ENCODE measurements at regions of chrX and their contacts with region 1.

Region 1: GRCh38 chrX:50747471-50747900 is 66.5 kb downstream of the SHROOM4 start:
- DNase-seq: no peak
- ATAC-seq: peak; percentile 45; the same call in 1 of the 3 replicates
- H3K4me3 ChIP-seq: no peak overlapping the region
- H3K27ac ChIP-seq: no peak overlapping the region
- H3K4me1 ChIP-seq: no peaks in the 10 kb centered on the region
- H3K27me3 ChIP-seq: no peaks in the 10 kb centered on the region
- CTCF ChIP-seq: peak; percentile 57 to 69 (median 68)
- EP300 ChIP-seq: no peak
- POLR2A ChIP-seq: no peak
- RAD21 ChIP-seq: peak; percentile 69

Region 2: DNA sequence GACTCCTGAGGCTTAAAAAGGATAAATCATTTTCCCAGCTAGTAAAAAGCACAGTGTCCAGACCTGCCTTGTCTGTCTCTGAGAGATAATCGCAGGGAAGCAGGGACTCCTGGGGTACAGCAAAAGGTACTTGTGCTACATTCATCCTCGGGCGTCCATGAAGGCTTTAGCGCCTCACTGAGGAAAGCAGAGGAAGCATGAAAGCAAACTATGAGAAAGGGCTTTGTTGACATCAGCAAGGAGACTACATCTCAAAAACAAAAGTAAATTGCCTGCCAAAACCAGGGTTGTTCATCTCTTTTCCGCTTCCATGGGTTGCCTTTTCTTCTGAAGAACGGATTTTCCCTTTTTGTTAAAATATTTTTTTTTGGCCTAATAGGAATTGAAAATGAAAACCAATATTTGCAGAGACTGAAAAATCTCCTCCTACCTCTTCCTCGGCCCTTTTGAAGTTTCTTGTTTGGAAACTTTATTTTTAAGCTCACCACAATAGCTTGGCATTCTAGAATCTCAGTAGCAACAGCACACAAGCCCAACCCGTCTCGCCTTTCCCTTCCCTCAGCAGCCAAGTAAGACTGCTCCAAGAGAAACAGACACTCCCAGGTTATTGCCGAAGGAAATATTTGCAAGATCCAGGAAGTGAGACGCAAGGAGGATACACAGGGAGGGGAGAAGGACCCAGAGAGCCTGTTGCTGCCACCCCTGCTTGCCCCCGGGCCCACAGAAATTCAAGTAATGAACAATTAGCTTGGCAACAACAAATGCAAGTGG is 128.5 kb before region 1 on chrX:
- CTCF ChIA-PET with region 1: no interaction called
- POLR2A ChIA-PET with region 1: no interaction called
- RAD21 ChIA-PET with region 1: no interaction called
- SMC1A ChIA-PET with region 1: no interaction called
- in situ Hi-C with region 1: no loop called
- intact Hi-C with region 1: no loop called
- DNase-seq: no peak
- ATAC-seq: no peak; the same call in 2 of the 3 replicates
- H3K4me3 ChIP-seq: no peak overlapping the region
- H3K27ac ChIP-seq: no peak overlapping the region
- H3K4me1 ChIP-seq: no peaks in the 10 kb centered on the region
- H3K27me3 ChIP-seq: no peaks in the 10 kb centered on the region
- CTCF ChIP-seq: no peak
- EP300 ChIP-seq: no peak
- POLR2A ChIP-seq: no peak
- RAD21 ChIP-seq: no peak

Region 3: DNA sequence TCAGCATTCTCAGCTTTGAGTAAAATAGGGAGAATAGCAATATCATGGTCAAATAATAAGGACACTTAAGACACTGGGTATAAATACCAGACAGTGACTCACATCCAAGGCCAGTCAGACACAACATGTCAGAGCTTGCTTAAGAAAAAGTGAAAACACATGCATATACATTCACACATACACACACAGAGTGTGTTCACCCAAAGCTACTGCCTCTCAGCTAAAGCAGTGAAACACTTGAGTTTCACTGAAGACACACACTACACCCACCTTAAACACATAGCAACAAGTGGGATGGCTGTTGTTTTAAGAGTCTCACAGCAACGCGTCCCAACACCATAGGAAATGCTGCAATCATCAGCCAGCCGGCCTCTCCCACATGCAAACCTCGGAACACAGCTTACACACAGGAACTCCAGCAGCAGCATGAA is 52.1 kb after region 1 on chrX:
- CTCF ChIA-PET with region 1: no interaction called
- POLR2A ChIA-PET with region 1: no interaction called
- RAD21 ChIA-PET with region 1: no interaction called
- SMC1A ChIA-PET with region 1: no interaction called
- in situ Hi-C with region 1: no loop called
- intact Hi-C with region 1: no loop called
- DNase-seq: no peak
- ATAC-seq: no peak
- H3K4me3 ChIP-seq: no peak overlapping the region
- H3K27ac ChIP-seq: no peak overlapping the region
- H3K4me1 ChIP-seq: no peaks in the 10 kb centered on the region
- H3K27me3 ChIP-seq: no peaks in the 10 kb centered on the region; a peak in 1 of 4 replicates
- CTCF ChIP-seq: no peak
- EP300 ChIP-seq: no peak
- POLR2A ChIP-seq: no peak
- RAD21 ChIP-seq: no peak

Region 4: GRCh38 chrX:50905334-50905733 is 157.8 kb after region 1 on chrX:
- CTCF ChIA-PET with region 1: interaction called, 15 read pairs
- POLR2A ChIA-PET with region 1: no interaction called
- RAD21 ChIA-PET with region 1: no interaction called
- SMC1A ChIA-PET with region 1: interaction called, 8 read pairs
- in situ Hi-C with region 1: no loop called
- intact Hi-C with region 1: loop called (anchors 1 kb)
- DNase-seq: no peak
- ATAC-seq: no peak
- H3K4me3 ChIP-seq: no peak overlapping the region
- H3K27ac ChIP-seq: no peak overlapping the region
- H3K4me1 ChIP-seq: no peaks in the 10 kb centered on the region
- H3K27me3 ChIP-seq: no peaks in the 10 kb centered on the region; a peak in 1 of 4 replicates
- CTCF ChIP-seq: peak; percentile 2 to 31 (median 27); a peak in 2 of 6 replicates
- EP300 ChIP-seq: no peak
- POLR2A ChIP-seq: no peak
- RAD21 ChIP-seq: no peak

Region 5: DNA sequence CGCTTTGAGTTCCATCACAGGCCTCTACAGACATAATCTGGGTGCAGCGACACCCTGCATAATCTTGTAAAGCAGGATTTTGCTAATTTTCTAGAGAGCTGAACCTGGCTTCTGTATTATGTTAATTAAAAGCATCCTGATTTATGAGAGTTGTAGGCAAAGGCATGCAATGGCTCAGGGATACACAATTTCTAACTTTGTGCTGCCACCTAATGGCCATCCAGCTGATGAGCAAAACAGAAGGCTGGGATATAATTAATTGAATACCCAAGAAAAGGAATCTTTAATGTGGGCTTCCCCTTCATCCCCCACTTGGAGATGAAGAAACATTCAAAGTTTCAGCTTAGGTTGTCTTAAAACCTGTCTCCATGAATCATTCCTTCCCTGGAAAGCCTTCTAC is 241.2 kb after region 1 on chrX:
- CTCF ChIA-PET with region 1: interaction called, 14 read pairs
- POLR2A ChIA-PET with region 1: no interaction called
- RAD21 ChIA-PET with region 1: interaction called, 5 read pairs
- SMC1A ChIA-PET with region 1: interaction called, 5 read pairs
- in situ Hi-C with region 1: no loop called
- intact Hi-C with region 1: loop called (anchors 2 kb)
- DNase-seq: no peak
- ATAC-seq: peak; percentile 77
- H3K4me3 ChIP-seq: no peak overlapping the region
- H3K27ac ChIP-seq: no peak overlapping the region
- H3K4me1 ChIP-seq: no peaks in the 10 kb centered on the region
- H3K27me3 ChIP-seq: no peaks in the 10 kb centered on the region
- CTCF ChIP-seq: peak; percentile 48 to 61 (median 60); a peak in 5 of 6 replicates
- EP300 ChIP-seq: no peak
- POLR2A ChIP-seq: no peak
- RAD21 ChIP-seq: peak; percentile 63

Region 6: DNA sequence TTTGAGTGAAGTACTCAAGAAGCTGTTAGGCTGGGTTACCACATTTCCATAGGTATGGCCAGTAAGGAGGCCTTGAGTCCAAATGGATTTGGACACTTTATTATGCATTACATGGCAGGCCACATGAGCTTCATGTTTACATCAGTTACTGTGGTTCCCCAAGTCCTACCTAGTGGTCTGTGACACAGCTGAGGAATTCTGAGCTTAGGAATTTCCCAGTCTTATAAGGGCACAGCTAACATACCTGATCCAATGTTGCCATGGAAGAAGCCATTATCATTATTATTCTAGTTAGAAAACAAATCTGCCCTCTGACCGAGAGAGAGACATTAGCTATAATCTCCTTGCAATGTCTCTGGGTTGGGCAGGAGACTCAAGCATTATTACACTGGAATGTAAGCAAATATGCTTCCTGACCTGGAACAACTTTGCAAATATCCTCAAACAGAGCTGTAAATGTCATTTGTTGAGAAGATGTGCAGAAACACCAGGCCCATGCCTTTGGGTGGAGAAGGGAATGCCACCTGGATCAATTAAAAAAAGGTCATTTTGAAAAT is 410.8 kb after region 1 on chrX:
- CTCF ChIA-PET with region 1: no interaction called
- POLR2A ChIA-PET with region 1: no interaction called
- RAD21 ChIA-PET with region 1: no interaction called
- SMC1A ChIA-PET with region 1: no interaction called
- in situ Hi-C with region 1: no loop called
- intact Hi-C with region 1: no loop called
- DNase-seq: no peak
- ATAC-seq: no peak
- H3K4me3 ChIP-seq: no peak overlapping the region
- H3K27ac ChIP-seq: no peak overlapping the region
- H3K4me1 ChIP-seq: no peaks in the 10 kb centered on the region
- H3K27me3 ChIP-seq: no peaks in the 10 kb centered on the region
- CTCF ChIP-seq: no peak
- EP300 ChIP-seq: no peak
- POLR2A ChIP-seq: no peak
- RAD21 ChIP-seq: no peak

Measured in GM12878 (cell line).